Calu3 (cell line): ENCODE measurements at regions of chr1 and their contacts with region 1.

Region 1: GRCh38 chr1:39919545-39919944 is 17.8 kb upstream of the MYCL start:
- DNase-seq: peak; percentile 64
- H3K4me3 Mint-ChIP-seq: no peak overlapping the region
- H3K27ac Mint-ChIP-seq: no peak overlapping the region
- H3K4me1 Mint-ChIP-seq: no peaks in the 10 kb centered on the region
- H3K27me3 Mint-ChIP-seq: peaks cover 23% of the 10 kb centered on the region
- CTCF ChIP-seq: peak; percentile 58

Region 2: DNA sequence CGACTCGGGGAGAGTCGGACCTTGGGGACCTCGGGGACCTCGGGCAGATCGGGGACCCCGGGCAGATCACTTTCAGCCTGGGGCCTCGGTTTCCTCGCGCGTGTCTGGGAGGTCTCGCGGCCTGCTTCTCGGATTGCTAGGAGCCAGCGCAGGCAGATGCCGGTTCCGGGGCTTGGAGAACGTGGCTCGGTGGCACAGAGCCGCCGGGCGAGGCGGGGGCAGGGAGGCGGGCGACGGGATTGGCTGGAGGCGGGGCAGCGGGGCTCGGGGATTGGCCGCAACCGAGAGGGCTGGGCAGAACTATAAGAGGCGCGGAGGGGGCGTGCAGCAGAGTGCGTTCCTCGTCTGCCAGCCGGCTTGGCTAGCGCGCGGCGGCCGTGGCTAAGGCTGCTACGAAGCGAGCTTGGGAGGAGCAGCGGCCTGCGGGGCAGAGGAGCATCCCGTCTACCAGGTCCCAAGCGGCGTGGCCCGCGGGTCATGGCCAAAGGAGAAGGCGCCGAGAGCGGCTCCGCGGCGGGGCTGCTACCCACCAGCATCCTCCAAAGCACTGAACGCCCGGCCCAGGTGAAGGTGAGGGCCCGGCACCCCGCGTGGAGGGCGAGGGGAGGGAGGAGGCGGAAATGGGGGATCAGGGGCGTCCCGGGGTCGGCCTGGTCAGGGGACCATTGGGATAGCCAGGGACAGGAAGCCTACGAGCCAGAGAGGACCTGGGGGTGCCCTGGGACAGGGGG is 35.4 kb after region 1 on chr1 and contains the start of gene MFSD2A:
- CTCF ChIA-PET with region 1: interaction called, 10 read pairs
- intact Hi-C with region 1: no loop called
- DNase-seq: peak; percentile 93
- H3K4me3 Mint-ChIP-seq: peak within 1 kb of the TSS; percentile 83
- H3K27ac Mint-ChIP-seq: peak within 1 kb of the TSS; percentile 36
- H3K4me1 Mint-ChIP-seq: peaks cover 9% of the 10 kb centered on the region
- H3K27me3 Mint-ChIP-seq: peaks cover 11% of the 10 kb centered on the region
- CTCF ChIP-seq: no peak
- total RNA-seq, gene MFSD2A: 3.9 and 4.9 TPM in 2 replicates

Region 3: GRCh38 chr1:39973503-39974135 is 54.1 kb after region 1 on chr1:
- CTCF ChIA-PET with region 1: interaction called, 46 read pairs
- intact Hi-C with region 1: loop called (anchors 1 kb)
- DNase-seq: peak; percentile 77
- H3K4me3 Mint-ChIP-seq: no peak overlapping the region
- H3K27ac Mint-ChIP-seq: no peak overlapping the region
- H3K4me1 Mint-ChIP-seq: peaks cover 6% of the 10 kb centered on the region
- H3K27me3 Mint-ChIP-seq: peaks cover 20% of the 10 kb centered on the region
- CTCF ChIP-seq: peak; percentile 94

Region 4: GRCh38 chr1:40032240-40032891 is 112.8 kb after region 1 on chr1:
- CTCF ChIA-PET with region 1: interaction called, 36 read pairs
- intact Hi-C with region 1: loop called (anchors 1 kb)
- DNase-seq: peak; percentile 60
- H3K4me3 Mint-ChIP-seq: no peak overlapping the region
- H3K27ac Mint-ChIP-seq: no peak overlapping the region
- H3K4me1 Mint-ChIP-seq: peaks cover 19% of the 10 kb centered on the region
- H3K27me3 Mint-ChIP-seq: peaks cover 17% of the 10 kb centered on the region
- CTCF ChIP-seq: peak; percentile 50